Transverse colon (tissue), 4 donors: ENCODE measurements at regions of chr17 and their contacts with region 1.

Region 1: DNA sequence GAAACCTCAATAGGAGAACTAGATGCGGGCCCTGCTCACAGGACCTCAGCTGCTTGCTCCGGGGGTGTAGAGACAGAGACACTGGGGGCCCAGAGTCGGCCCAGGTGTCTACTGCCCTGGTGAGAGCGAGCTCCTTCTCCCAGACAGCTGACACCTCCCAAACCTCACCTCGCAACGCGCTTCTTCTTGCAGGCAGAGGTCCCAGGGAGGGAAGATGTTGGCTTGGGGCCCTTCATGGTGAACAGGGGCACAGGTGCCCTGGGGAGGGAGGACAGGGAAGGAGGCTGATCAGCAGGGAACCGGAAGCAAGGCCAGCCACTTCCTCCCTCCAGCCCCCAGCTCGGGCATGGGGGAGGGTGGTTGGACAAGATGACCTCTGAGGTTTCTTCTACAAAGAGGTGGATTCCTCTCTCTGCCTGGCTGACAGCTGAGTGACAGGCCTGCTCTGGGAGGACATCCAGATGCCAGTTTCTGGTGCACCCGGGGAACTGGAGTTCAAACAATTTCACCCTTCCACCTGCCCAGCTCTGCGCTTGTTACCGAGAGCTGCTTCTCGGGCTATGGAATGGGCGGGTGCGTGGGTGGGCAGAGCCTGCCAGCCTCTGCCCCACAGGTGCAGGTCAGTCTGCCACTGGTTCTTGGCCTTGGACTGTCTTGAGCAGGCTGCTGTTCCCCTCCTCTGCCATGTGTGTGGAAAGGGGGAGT is 11.7 kb upstream of the GFAP start:
- DNase-seq: peak; percentile 4
- H3K4me3 ChIP-seq: no peak overlapping the region
- H3K27ac ChIP-seq: no peak overlapping the region
- H3K4me1 ChIP-seq: no peaks in the 10 kb centered on the region
- H3K27me3 ChIP-seq: no peaks in the 10 kb centered on the region
- CTCF ChIP-seq: no peak
- EP300 ChIP-seq: no peak
- POLR2A ChIP-seq: no peak

Region 2: DNA sequence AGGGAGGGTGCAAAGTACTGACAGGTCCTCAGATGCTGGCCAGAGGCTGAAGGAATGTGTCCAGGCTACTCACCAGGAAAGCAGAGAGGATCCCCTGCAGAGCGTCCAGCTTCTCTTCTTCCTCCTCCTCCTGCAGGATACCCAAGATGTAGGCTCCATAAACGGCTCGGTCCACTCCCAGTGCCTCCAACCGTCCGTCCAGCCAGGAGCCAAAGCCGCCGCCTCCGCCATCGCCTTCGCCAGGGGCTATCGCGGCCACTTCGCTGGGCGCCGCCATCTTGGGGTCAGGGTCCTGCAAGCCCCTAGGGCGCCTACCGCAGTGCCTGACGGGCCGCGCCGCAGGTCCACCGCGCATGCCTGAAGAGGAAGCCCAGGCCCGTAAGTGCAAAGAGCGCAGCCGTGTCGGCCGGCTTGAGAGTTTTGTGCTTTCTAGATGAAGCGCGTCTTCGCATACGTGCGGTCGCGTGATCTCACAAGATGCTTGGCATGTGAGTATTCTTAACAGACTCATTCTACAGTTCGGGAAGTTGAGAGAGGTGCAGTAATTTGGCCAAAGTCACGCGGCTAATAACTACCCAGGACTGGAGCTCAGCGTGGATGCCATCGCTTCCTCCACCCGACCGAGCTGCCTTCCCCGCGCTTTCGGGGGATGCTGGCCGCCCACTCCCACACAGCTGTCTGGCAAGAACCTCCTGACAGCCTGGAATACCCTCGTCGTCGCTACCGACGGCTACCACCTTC is 237.3 kb before region 1 on chr17 and contains the start of gene CCDC43:
- in situ Hi-C with region 1: no loop called
- intact Hi-C with region 1: no loop called
- DNase-seq: peak; percentile 92
- H3K4me3 ChIP-seq: peak within 1 kb of the TSS; percentile 35 to 77 (median 68)
- H3K27ac ChIP-seq: peak within 1 kb of the TSS; percentile 78 to 88 (median 85)
- H3K4me1 ChIP-seq: peaks cover 0 to 18% (median 14%) of the 10 kb centered on the region in 4 donors
- H3K27me3 ChIP-seq: no peaks in the 10 kb centered on the region
- CTCF ChIP-seq: no peak
- EP300 ChIP-seq: no peak
- POLR2A ChIP-seq: peak; percentile 60
- total RNA-seq, gene CCDC43: 2.0 to 16.1 (median 13.8) TPM

Region 3: DNA sequence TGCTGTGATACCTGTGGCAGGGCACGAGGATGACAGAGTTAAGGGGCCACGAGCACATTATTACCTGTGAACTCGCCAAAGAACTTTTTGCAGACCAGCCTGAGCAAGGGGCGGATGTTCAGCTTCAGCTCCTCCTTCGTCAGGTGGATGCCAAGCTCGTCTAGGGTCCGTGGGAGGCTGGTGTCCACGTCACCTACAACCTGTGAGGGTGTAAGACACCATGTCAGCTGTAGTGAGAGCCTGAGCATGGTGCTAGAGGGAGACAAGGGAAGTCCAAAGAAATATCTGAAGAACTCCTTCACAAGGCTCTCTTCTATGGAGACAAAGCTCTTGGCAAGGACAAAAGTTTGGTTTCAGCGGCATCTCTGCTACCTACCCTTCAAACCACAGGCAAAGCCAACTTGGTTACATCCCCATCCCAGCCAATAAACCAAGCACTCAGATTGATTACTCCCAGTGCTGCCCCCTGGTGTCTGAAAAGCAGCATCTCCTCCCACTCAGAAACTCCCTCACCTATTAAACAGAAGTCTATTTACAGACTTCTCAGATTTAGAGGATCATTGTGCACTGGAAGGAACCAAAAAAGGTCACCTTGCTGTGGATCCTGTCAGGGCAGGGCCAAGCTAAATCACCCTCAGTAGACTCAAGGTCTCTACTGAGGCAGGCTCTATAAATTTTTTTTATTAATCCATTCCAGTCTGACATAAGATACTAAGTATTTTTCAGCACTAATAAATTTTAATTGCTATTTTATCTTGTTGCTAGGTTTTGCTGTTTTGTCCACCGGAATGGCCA is 61.9 kb before region 1 on chr17:
- in situ Hi-C with region 1: no loop called
- intact Hi-C with region 1: no loop called
- DNase-seq: peak; percentile 69
- H3K4me3 ChIP-seq: no peak overlapping the region
- H3K27ac ChIP-seq: peak overlapping the region; percentile 8 to 81 (median 72)
- H3K4me1 ChIP-seq: peaks cover 0 to 5% (median 4%) of the 10 kb centered on the region in 4 donors
- H3K27me3 ChIP-seq: no peaks in the 10 kb centered on the region
- CTCF ChIP-seq: peak; percentile 84 to 92 (median 89)
- EP300 ChIP-seq: peak; percentile 16
- POLR2A ChIP-seq: no peak

Region 4: GRCh38 chr17:45013021-45013997 is 86.3 kb after region 1 on chr17:
- in situ Hi-C with region 1: loop called in 2 of 4 experiments (anchors 5 to 10 kb)
- intact Hi-C with region 1: no loop called
- DNase-seq: no peak
- H3K4me3 ChIP-seq: no peak overlapping the region
- H3K27ac ChIP-seq: peak overlapping the region; percentile 8 to 37 (median 30)
- H3K4me1 ChIP-seq: peaks cover 0 to 15% (median 5%) of the 10 kb centered on the region in 4 donors
- H3K27me3 ChIP-seq: no peaks in the 10 kb centered on the region
- CTCF ChIP-seq: no peak
- EP300 ChIP-seq: no peak
- POLR2A ChIP-seq: no peak